ENCODE measurements at regions of chr21 and their contacts with region 1.

Region 1: GRCh38 chr21:34029743-34030528 is 43.4 kb upstream of the MRPS6 start:
- DNase-seq: peak; percentile 42
- H3K4me3 Mint-ChIP-seq: peak overlapping the region; percentile 51
- H3K27ac Mint-ChIP-seq: peak overlapping the region; percentile 96
- H3K4me1 Mint-ChIP-seq: peaks cover 30% of the 10 kb centered on the region
- H3K27me3 Mint-ChIP-seq: no peaks in the 10 kb centered on the region

Region 2: DNA sequence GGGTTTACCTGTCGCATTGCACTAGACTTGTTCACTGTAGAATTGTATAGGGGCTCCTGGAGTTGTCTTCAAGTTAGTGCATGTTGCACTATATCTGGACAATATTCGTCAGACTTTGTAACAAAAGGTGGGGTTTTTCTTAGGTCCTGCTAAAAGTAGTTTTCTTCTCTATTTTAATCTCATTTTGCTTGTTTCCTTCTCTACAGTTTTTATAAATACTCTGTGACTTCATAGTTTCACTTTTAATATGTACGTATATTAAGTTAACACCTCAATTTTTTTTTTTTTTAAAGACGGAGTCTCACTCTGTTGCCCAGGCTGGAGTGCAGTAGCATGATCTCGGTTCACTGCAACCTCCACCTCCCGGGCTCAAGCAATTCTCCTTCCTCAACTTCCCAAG is 17.0 kb after region 1 on chr21:
- intact Hi-C with region 1: loop called (anchors 2 kb)
- DNase-seq: no peak
- H3K4me3 Mint-ChIP-seq: no peak overlapping the region
- H3K27ac Mint-ChIP-seq: no peak overlapping the region
- H3K4me1 Mint-ChIP-seq: peaks cover 7% of the 10 kb centered on the region
- H3K27me3 Mint-ChIP-seq: peaks cover 4% of the 10 kb centered on the region